Esophagus muscularis mucosa (tissue), 4 donors: ENCODE measurements at regions of chr12 and their contacts with region 1.

Region 1: DNA sequence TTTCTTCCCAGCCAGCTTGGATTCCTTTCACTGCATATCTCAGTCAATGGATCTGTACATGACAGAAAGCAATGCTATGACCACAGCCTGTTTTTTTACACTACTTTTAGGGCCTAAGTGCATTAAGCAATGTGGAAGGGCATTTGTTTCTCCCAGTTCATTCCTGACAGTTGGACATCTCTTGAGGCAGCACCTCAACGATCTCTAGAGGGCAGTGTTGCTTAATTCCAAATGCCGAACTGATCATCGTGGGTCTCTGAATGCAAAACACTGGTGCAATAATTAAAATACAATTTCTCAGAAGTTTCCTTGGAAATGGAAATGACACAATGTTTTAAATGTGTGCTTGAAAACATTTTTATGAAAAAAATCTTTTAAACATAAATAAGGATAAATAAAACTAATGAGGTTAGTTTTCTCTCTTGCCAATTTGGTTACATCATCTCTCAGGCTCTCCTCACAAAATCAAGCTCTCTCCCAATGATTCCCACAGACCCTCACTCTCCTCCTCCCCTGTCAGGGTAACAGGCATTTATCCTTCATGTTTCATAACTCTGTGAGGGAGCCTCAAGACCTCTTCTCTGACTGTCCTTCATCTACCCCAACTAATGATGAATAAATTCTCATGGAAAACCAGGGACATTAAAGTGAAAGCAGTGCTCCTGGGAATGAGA is 192.4 kb upstream of the SLC16A7 start:
- DNase-seq: no peak
- H3K4me3 ChIP-seq: peak overlapping the region in 1 of 4 donors; percentile 24
- H3K27ac ChIP-seq: no peak overlapping the region
- H3K4me1 ChIP-seq: peaks cover 0 to 7% (median 4%) of the 10 kb centered on the region in 4 donors
- H3K27me3 ChIP-seq: no peaks in the 10 kb centered on the region
- CTCF ChIP-seq: peak; percentile 66 to 82 (median 79)
- EP300 ChIP-seq: no peak
- POLR2A ChIP-seq: no peak

Region 2: DNA sequence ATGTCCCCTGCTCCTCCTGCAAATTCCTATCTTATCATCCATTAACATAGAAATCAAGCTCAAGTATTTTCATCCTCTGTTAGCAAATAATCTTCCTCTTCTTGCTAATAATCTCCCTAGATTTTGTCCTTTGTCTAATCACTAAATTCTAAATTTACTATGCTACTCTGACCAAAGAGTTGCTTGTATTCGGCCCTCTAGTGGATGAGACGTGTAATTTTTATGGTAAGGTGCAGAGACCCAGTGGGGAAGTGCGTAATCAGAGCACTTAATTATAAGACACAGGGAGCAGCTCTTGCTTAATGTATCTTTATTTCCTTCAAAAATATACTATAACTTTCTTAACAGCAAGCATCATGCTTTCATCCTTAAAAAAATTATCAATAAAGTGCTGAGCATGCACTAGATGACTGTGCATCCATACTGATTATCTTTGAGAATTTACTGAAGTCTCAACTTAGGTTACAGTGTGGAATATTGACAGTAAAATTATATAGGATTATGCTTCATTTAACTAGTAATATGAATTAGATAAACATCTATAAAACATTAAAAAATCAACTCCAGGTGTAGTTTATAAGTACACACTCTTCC is 405.0 kb after region 1 on chr12:
- intact Hi-C with region 1: loop called (anchors 5 kb)
- DNase-seq: no peak
- H3K4me3 ChIP-seq: no peak overlapping the region
- H3K27ac ChIP-seq: no peak overlapping the region
- H3K4me1 ChIP-seq: peaks cover 0 to 5% (median 2%) of the 10 kb centered on the region in 4 donors
- H3K27me3 ChIP-seq: no peaks in the 10 kb centered on the region
- CTCF ChIP-seq: peak; percentile 62 to 74 (median 62)
- EP300 ChIP-seq: no peak
- POLR2A ChIP-seq: no peak